Left lung (tissue), 14 donors: ENCODE measurements at regions of chr13 and their contacts with region 1.

Region 1: GRCh38 chr13:78137404-78138142 is 218.9 kb upstream of the EDNRB start:
- DNase-seq: peak in 2 of 4 donors; percentile 44 to 49
- ATAC-seq: peak; percentile 97
- H3K4me3 ChIP-seq: no peak overlapping the region
- H3K27ac ChIP-seq: no peak overlapping the region
- H3K4me1 ChIP-seq: no peaks in the 10 kb centered on the region
- H3K27me3 ChIP-seq: no peaks in the 10 kb centered on the region
- CTCF ChIP-seq: peak; percentile 65 to 69

Region 2: GRCh38 chr13:78201411-78201810 is 63.8 kb after region 1 on chr13:
- intact Hi-C with region 1: no loop called
- DNase-seq: no peak
- ATAC-seq: no peak
- H3K4me3 ChIP-seq: no peak overlapping the region
- H3K27ac ChIP-seq: no peak overlapping the region
- H3K4me1 ChIP-seq: no peaks in the 10 kb centered on the region
- H3K27me3 ChIP-seq: no peaks in the 10 kb centered on the region
- CTCF ChIP-seq: no peak

Region 3: GRCh38 chr13:78393286-78394138 is 255.9 kb after region 1 on chr13:
- intact Hi-C with region 1: no loop called
- DNase-seq: no peak
- ATAC-seq: no peak
- H3K4me3 ChIP-seq: no peak overlapping the region
- H3K27ac ChIP-seq: no peak overlapping the region
- H3K4me1 ChIP-seq: no peaks in the 10 kb centered on the region
- H3K27me3 ChIP-seq: no peaks in the 10 kb centered on the region
- CTCF ChIP-seq: no peak

Region 4: GRCh38 chr13:78540058-78540457 is 402.5 kb after region 1 on chr13:
- intact Hi-C with region 1: no loop called
- DNase-seq: no peak
- ATAC-seq: no peak
- H3K4me3 ChIP-seq: no peak overlapping the region
- H3K27ac ChIP-seq: no peak overlapping the region
- H3K4me1 ChIP-seq: no peaks in the 10 kb centered on the region
- H3K27me3 ChIP-seq: no peaks in the 10 kb centered on the region
- CTCF ChIP-seq: no peak

Region 5: DNA sequence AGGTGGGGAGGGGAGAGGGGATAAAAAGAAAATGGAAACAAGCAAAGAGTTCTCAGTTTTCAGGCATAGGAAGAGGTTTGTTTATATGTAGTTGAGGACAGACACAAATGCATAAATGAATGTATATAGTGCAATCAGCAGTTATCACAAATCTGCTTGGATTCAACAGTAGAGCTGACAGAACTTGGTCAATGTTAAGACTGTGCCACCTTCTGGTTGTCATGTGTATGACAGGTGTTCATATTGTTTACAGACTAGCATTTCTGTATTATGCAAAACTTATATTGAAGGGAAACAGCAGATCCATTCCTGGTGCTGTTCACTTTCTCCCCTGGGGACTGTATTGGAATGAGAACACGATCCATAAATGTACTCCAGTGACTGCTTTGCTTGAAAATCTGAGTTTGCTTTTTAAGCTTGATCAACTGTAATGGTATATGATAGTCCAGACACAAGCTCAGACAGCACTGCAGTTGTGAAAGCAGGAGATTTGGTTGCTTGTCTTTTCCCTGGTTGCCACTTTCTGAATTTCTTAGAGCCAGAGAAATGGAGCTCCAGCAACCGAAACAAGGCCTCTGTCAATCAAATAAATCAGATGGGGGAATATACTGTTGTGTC is 840.9 kb after region 1 on chr13:
- intact Hi-C with region 1: loop called in 1 of 2 experiments (anchors 5 kb)
- DNase-seq: peak in 2 of 4 donors; percentile 40 to 73
- ATAC-seq: peak; percentile 94
- H3K4me3 ChIP-seq: no peak overlapping the region
- H3K27ac ChIP-seq: no peak overlapping the region
- H3K4me1 ChIP-seq: no peaks in the 10 kb centered on the region
- H3K27me3 ChIP-seq: no peaks in the 10 kb centered on the region
- CTCF ChIP-seq: peak; percentile 45 to 53